IMR-90 (cell line): ENCODE measurements at regions of chr7 and their contacts with region 1.

Region 1: DNA sequence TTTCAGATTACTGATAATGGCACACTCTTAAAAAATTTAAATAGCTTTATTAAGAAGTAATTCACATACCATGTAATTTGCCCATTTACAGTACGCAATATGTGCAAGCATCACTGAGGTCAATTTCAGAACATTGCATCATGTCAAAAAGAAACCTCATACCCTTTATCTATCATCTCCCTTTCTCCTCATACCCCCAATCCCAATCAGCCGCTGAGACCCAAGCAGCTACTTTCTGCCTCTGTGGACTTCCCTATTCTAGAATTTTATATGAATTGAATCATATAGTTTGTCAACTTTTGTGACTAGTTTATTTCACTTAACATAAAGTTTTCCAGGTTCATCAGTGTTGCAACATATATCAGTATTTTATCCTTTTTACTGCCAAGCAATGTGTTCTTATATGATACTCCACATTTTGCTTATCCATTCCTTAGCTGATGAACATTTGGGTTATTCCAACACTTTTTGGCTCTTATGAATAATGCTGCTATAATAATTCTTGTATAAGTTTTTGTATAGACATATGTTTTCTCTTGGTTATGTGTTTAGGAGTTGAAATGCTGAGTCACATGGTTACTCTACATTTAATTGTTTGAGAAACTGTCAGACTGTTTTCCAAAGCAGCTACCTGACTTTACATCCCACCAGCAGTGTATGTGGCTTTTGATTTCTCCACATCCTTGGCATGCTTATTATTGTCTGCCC is 26.9 kb upstream of the TPK1 start:
- DNase-seq: no peak
- ATAC-seq: no peak
- H3K4me3 ChIP-seq: no peak overlapping the region
- H3K27ac ChIP-seq: no peak overlapping the region
- H3K4me1 ChIP-seq: no peaks in the 10 kb centered on the region
- H3K27me3 ChIP-seq: no peaks in the 10 kb centered on the region
- CTCF ChIP-seq: no peak
- POLR2A ChIP-seq: no peak
- RAD21 ChIP-seq: no peak

Region 2: GRCh38 chr7:144835652-144836544 is 26.9 kb before region 1 on chr7 and contains the start of gene TPK1:
- CTCF ChIA-PET with region 1: no interaction called
- POLR2A ChIA-PET with region 1: interaction called, 13 read pairs
- dilution Hi-C with region 1: no loop called
- in situ Hi-C with region 1: no loop called
- intact Hi-C with region 1: no loop called
- DNase-seq: peak; percentile 66
- ATAC-seq: peak; percentile 95
- H3K4me3 ChIP-seq: peak within 1 kb of the TSS; percentile 43
- H3K27ac ChIP-seq: no peak within 1 kb of the TSS
- H3K4me1 ChIP-seq: no peaks in the 10 kb centered on the region
- H3K27me3 ChIP-seq: no peaks in the 10 kb centered on the region
- CTCF ChIP-seq: no peak
- POLR2A ChIP-seq: no peak
- RAD21 ChIP-seq: no peak
- total RNA-seq, gene TPK1: 1.1 and 1.8 TPM in 2 replicates